GM12878 (cell line): ENCODE measurements at regions of chr3 and their contacts with region 1.

Region 1: GRCh38 chr3:38190481-38190881 is 25.1 kb downstream of the OXSR1 start:
- DNase-seq: no peak
- ATAC-seq: no peak
- H3K4me3 ChIP-seq: no peak overlapping the region
- H3K27ac ChIP-seq: no peak overlapping the region
- H3K4me1 ChIP-seq: no peaks in the 10 kb centered on the region
- H3K27me3 ChIP-seq: no peaks in the 10 kb centered on the region
- CTCF ChIP-seq: no peak
- EP300 ChIP-seq: no peak
- POLR2A ChIP-seq: no peak
- RAD21 ChIP-seq: no peak

Region 2: DNA sequence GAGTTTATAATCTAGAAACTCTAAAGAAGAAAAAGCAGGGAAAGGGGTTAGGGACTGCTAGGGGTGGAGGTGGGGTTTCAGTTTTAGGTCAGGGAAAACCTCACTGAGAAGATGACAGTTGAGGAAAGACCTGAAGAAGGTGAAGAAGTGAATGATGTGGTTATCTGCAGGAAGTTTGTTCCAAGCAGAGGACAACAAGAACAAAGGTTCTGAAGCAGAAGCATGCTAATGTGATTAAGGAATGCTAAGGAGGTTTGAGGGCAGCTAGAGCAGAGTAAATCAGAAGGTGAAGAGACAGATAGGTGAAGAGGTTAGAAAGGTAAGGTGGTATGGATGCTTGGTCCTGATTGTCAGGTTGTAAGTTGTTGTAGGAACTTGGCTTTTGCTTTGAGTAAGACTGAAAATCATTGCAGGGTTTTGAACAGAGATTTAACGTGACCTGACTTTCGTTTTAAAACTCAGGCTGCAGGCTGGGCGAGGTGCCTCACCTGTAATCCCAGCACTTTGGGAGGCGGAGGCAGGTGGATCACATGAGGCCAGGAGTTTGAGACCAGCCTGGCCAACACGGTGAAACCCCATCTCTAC is 16.6 kb before region 1 on chr3:
- CTCF ChIA-PET with region 1: interaction called, 5 read pairs
- POLR2A ChIA-PET with region 1: interaction called, 3 read pairs
- RAD21 ChIA-PET with region 1: no interaction called
- SMC1A ChIA-PET with region 1: interaction called, 11 read pairs
- in situ Hi-C with region 1: no loop called
- intact Hi-C with region 1: no loop called
- DNase-seq: no peak
- ATAC-seq: peak; percentile 64
- H3K4me3 ChIP-seq: peak overlapping the region; percentile 54
- H3K27ac ChIP-seq: peak overlapping the region; percentile 2; the same call in 1 of the 2 replicates
- H3K4me1 ChIP-seq: peaks cover 30% of the 10 kb centered on the region
- H3K27me3 ChIP-seq: no peaks in the 10 kb centered on the region
- CTCF ChIP-seq: no peak
- EP300 ChIP-seq: no peak
- POLR2A ChIP-seq: no peak
- RAD21 ChIP-seq: no peak

Region 3: DNA sequence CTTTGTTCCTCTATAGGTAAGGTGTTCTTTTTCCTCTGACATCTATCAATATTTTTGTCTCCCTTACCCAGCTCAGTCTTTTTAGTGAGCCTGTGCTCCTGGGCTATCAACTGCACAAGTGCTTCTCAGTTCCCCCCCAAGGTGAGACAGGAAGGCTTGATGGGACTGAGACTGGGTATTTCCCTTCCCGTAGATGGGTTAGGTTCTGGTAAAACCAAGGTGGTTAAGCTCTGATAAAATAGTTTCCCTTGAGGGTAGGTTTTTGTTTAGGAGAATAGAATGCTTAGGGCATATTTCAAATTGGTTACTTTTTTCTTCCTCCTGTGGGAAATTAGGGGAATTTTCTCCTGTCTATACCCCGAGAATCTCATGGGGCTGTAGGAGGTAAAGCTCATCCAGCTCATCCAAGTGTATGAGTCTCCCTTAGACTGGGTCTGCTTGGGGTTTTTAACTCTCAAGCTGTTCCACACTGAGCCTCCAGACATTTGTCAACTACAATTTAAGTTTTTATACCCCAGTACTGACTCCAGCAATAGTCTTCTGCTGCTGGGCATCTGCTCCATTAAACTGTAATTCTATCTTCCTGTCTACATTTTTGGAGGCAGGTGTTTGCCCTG is 19.8 kb after region 1 on chr3:
- CTCF ChIA-PET with region 1: interaction called, 4 read pairs
- POLR2A ChIA-PET with region 1: no interaction called
- RAD21 ChIA-PET with region 1: no interaction called
- SMC1A ChIA-PET with region 1: interaction called, 27 read pairs
- in situ Hi-C with region 1: no loop called
- intact Hi-C with region 1: no loop called
- DNase-seq: peak; percentile 65
- ATAC-seq: peak; percentile 92
- H3K4me3 ChIP-seq: no peak overlapping the region
- H3K27ac ChIP-seq: peak overlapping the region; percentile 59
- H3K4me1 ChIP-seq: peaks cover 20% of the 10 kb centered on the region
- H3K27me3 ChIP-seq: no peaks in the 10 kb centered on the region
- CTCF ChIP-seq: no peak
- EP300 ChIP-seq: peak in 1 of 2 experiments; percentile 35; a peak in 1 of 4 replicates
- POLR2A ChIP-seq: no peak
- RAD21 ChIP-seq: no peak